ENCODE measurements at regions of chr4 and their contacts with region 1.

Region 1: DNA sequence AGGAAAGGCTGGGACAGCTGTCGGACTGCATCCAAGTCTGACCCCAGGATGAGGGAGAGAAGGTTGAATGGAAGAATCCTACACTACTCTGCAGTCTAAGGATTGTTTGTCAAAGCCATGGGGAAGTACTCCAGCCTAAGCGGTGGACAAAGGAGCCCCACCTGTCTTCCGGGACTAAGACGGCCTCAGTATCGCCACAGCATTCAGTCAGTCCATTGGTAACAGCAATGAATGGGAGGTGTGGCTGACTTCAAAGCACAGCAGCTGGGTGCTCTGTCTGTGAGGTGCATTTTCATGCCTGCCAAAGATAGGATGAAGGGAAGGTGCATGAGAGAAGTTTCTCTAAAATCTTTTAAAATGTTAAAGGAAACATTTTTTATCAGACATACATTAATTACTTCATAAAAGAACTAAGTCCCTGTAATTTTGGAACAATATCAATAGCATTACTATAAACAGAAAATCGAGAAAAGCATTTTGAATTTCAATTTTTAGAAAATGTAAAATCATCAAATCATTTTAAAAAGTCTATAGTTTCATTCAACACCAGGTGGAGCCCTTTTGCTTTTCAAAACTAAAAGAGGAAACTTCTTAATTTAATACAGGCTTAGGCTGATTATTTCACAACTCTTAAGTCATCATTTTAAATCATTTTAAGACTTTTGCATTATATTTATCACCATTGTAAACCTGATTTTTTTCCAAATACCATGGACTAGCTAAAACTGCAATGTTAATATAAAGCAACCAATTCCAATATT is 27.6 kb upstream of the INTU start:
- DNase-seq: no peak
- H3K4me3 ChIP-seq: no peak overlapping the region
- H3K27ac ChIP-seq: no peak overlapping the region
- H3K4me1 ChIP-seq: no peaks in the 10 kb centered on the region
- H3K27me3 ChIP-seq: no peaks in the 10 kb centered on the region
- CTCF ChIP-seq: peak in 2 of 3 experiments; percentile 9 to 65
- POLR2A ChIP-seq: no peak

Region 2: GRCh38 chr4:127548990-127549925 is 55.9 kb before region 1 on chr4:
- intact Hi-C with region 1: no loop called
- DNase-seq: no peak
- H3K4me3 ChIP-seq: no peak overlapping the region
- H3K27ac ChIP-seq: no peak overlapping the region
- H3K4me1 ChIP-seq: no peaks in the 10 kb centered on the region
- H3K27me3 ChIP-seq: no peaks in the 10 kb centered on the region
- CTCF ChIP-seq: no peak
- POLR2A ChIP-seq: no peak

Region 3: DNA sequence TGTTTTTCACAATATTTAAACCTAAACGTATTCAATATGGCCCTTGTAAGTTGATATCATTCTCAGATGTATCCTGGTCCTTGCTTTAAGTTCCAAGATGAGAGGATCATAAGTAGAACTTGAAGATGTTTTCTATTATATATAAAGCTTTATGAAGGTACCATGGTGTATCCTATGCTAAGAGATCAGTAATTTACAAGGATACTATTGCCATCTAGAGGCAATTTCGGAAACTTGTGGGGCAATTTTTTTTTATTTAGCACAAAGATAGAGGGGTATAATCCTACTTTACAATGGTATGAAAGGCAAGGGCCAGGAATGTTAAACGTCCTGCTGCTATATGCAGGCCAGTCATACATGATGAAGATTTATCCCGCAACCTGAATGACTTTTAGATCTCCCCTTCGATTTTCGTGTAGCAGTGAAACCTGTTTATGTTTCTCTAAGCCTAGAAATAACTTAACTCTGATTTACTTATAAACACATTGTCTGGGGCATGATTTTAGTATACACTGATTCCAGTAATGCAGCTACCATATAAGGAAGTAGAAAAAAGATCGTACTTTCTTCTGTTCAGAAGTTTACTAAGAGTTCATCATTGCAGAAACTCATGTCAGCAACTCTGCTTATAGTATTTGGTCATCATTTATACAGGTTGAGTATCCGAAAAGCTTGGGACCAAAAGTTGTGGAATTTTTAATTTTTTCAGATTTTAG is 127.6 kb after region 1 on chr4:
- intact Hi-C with region 1: loop called (anchors 5 kb)
- DNase-seq: no peak
- H3K4me3 ChIP-seq: no peak overlapping the region
- H3K27ac ChIP-seq: no peak overlapping the region
- H3K4me1 ChIP-seq: no peaks in the 10 kb centered on the region
- H3K27me3 ChIP-seq: no peaks in the 10 kb centered on the region
- CTCF ChIP-seq: peak in 2 of 3 experiments; percentile 19 to 48
- POLR2A ChIP-seq: no peak

Measured in testis (tissue), 5 donors.